ENCODE measurements at regions of chr12 and their contacts with region 1.

Region 1: DNA sequence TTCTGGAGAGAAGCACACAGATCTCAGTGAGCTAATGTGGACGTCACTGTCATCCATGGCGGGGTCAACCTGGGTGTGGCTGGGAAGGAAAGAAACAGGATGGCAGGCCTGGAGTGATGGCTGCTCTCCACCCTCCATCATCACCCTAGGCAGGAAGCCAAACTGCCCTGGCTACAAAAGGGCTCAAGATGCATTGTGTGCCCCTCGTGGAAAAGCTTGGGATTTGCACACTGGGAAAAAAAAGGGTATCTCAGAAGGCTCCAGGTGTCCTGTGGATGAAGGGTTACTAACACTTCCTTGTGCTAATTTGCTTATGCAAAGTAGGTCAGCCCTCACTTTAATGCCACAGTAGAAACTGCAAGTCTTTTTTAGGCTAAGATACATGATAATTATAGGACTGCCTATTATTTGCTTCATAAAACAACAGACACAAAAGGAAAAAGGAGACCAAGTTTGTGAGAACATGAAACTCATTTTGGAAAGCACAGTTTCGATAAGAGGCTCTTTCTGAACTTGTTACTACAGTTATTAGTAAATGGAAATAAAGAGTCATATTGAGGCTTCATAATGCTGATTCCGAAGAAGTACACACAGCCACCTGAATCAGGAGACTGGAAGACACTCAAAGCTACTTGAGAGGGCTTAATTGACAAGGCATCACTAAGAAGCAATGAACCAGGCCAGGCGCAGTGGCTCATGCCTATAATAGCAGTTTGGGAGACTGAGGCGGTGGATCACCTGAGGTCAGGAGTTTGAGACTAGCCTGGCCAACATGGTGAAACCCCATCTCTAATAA is 18.9 kb downstream of the RFC5 start:
- DNase-seq: peak; percentile 90
- ATAC-seq: peak; percentile 91
- H3K4me3 ChIP-seq: no peak overlapping the region
- H3K27ac ChIP-seq: peak overlapping the region; percentile 75
- H3K4me1 ChIP-seq: peaks cover 29% of the 10 kb centered on the region
- H3K27me3 ChIP-seq: no peaks in the 10 kb centered on the region
- CTCF ChIP-seq: peak in 2 of 3 experiments; percentile 5 to 13; a peak in 1 of 6 replicates
- EP300 ChIP-seq: peak; percentile 60 to 74; a peak in 3 of 4 replicates
- POLR2A ChIP-seq: 0 out of 2 replicates have a peak, but pooled peaks have one; percentile 19
- RAD21 ChIP-seq: no peak

Region 2: GRCh38 chr12:118016424-118017264 is 18.8 kb before region 1 on chr12 and contains the start of gene RFC5:
- CTCF ChIA-PET with region 1: interaction called, 6 read pairs
- POLR2A ChIA-PET with region 1: interaction called, 7 read pairs
- RAD21 ChIA-PET with region 1: no interaction called
- SMC1A ChIA-PET with region 1: interaction called, 10 read pairs
- in situ Hi-C with region 1: no loop called
- intact Hi-C with region 1: no loop called
- DNase-seq: peak; percentile 87
- ATAC-seq: peak; percentile 97
- H3K4me3 ChIP-seq: peak within 1 kb of the TSS; percentile 69
- H3K27ac ChIP-seq: peak within 1 kb of the TSS; percentile 82
- H3K4me1 ChIP-seq: 0 out of 2 replicates have a peak, but pooled peaks cover 3% of the 10 kb centered on the region
- H3K27me3 ChIP-seq: no peaks in the 10 kb centered on the region
- CTCF ChIP-seq: 0 out of 6 replicates have a peak, but pooled peaks of 1 of the 3 experiments have one; percentile 3
- EP300 ChIP-seq: no peak
- POLR2A ChIP-seq: peak; percentile 97
- RAD21 ChIP-seq: no peak
- polyA plus RNA-seq, gene RFC5: 47.3 to 73.3 TPM

Region 3: DNA sequence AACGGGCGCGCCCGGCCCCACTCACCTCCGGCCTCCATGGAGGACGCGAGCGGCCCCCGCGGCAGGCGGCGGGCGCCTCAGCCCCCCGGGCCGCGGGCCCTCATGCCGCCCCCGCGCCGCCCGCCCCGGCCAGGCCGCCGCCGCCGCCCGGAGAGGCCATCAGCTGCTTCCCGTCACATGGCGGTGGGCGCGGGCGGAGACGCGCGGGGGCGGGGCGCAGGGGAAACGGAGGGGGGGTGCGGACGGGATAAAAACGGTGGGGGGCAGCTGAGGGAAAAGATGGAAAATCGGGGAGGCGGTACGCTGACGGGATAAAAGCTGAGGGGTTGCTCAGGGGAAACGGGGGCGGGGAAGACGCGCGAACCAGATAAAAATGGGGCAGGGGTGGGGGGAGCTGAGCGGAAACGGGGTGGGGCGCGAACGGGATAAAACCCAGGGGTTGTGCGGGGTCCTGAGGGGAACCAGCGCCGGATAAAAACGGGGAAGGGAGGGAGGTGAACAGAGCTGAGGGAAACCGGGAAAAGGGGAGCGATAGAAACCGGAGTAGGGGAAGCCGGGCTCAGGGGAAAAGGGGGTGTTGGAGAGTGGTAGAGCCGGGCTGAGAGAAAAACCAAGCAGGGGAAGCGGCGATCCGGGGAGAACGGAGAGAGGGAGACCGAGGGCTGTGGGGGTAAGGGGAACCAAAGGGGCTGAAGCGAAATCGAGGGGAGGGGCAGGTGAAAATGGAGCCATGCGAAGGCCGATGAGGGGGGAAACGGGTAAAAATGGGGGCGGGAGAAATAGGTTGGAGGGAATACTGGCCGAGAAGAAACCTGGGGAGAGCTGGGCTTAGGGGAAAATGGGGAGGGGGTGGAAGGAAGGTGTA is 25.8 kb after region 1 on chr12 and contains the start of gene WSB2:
- CTCF ChIA-PET with region 1: interaction called, 14 read pairs
- POLR2A ChIA-PET with region 1: interaction called, 6 read pairs
- RAD21 ChIA-PET with region 1: interaction called, 10 read pairs
- SMC1A ChIA-PET with region 1: interaction called, 8 read pairs
- in situ Hi-C with region 1: no loop called
- intact Hi-C with region 1: no loop called
- DNase-seq: no peak
- ATAC-seq: peak; percentile 40
- H3K4me3 ChIP-seq: peak within 1 kb of the TSS; percentile 96
- H3K27ac ChIP-seq: peak within 1 kb of the TSS; percentile 93
- H3K4me1 ChIP-seq: peaks cover 13% of the 10 kb centered on the region
- H3K27me3 ChIP-seq: no peaks in the 10 kb centered on the region
- CTCF ChIP-seq: no peak
- EP300 ChIP-seq: no peak
- POLR2A ChIP-seq: peak; percentile 50; the same call in 1 of the 2 replicates
- RAD21 ChIP-seq: no peak
- polyA plus RNA-seq, gene WSB2: 30.0 to 33.6 TPM

Region 4: DNA sequence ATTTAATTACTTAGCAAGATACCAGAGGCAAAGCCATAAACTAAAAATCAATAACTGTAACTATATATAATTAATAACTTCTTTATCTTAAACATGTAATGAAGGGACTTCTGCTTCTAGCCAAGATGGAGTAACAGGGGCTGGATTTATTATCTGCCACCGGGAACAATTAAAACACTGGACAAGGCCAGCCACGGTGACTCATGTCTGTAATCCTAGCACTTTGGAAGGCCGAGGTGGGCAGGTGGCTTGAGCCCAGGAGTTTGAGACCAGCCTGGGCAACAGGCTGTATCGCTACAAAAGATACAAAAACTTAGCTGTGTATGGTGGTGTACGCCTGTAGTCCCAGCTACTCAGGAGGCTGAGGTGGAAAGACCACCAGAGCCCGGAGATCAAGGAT is 223.6 kb after region 1 on chr12:
- CTCF ChIA-PET with region 1: no interaction called
- POLR2A ChIA-PET with region 1: no interaction called
- RAD21 ChIA-PET with region 1: no interaction called
- SMC1A ChIA-PET with region 1: no interaction called
- in situ Hi-C with region 1: no loop called
- intact Hi-C with region 1: no loop called
- DNase-seq: no peak
- ATAC-seq: no peak
- H3K4me3 ChIP-seq: no peak overlapping the region
- H3K27ac ChIP-seq: no peak overlapping the region
- H3K4me1 ChIP-seq: no peaks in the 10 kb centered on the region
- H3K27me3 ChIP-seq: no peaks in the 10 kb centered on the region
- CTCF ChIP-seq: no peak
- EP300 ChIP-seq: no peak
- POLR2A ChIP-seq: no peak
- RAD21 ChIP-seq: no peak

Measured in GM12878 (cell line).